ENCODE measurements at regions of chr2 and their contacts with region 1.

Region 1: GRCh38 chr2:190679813-190680591 is 31.1 kb downstream of the NAB1 start:
- DNase-seq: peak; percentile 80
- H3K4me3 Mint-ChIP-seq: peak overlapping the region; percentile 61
- H3K27ac Mint-ChIP-seq: peak overlapping the region; percentile 98
- H3K4me1 Mint-ChIP-seq: peaks cover 66% of the 10 kb centered on the region
- H3K27me3 Mint-ChIP-seq: no peaks in the 10 kb centered on the region

Region 2: DNA sequence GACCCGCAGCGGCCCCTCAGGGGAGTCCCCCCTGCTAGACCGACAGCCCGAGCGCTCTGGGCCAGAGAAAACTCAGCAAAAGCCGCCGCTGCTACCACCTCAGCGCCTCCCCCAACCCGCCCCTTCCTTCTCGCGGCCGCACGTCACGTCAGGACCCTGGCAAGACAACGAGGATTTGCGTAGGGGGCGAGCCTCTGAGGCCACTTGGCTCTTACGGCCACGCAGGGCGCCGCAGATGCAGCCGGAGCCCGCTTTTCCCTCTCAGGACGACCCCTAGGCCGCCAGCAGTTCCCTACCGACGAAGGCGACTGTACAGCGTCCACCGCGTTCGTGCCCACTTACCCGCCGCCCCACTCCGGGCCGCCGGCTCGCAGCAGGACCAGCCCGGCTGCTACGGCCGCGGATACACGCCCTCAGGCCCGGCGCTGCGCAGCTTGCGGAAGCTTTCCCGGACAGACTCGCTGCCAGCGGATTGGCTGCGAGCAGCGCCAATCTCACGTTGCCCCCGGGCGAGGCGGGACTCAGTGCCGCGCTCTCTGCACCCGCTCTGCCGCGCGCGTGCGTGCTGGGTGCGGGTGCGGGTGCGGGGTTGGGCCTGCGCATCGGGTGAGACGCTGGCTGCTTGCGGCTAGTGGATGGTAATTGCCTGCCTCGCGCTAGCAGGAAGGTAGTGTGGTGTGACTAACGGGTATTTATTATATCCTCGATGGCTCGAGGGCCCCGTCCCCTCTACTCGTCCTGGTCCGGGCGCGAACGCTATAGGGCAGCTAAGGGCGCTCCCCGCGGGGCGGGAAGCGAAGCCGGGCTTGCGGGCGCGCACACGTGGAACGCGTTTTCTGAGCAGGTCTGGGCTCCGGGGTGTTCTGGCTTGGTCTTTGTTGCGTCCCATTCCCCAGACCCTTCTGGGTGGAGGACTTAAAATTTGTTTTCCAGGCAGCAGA is 895.8 kb before region 1 on chr2 and contains the starts of genes ORMDL1 and PMS1:
- CTCF ChIA-PET with region 1: no interaction called
- POLR2A ChIA-PET with region 1: no interaction called
- intact Hi-C with region 1: loop called (anchors 10 kb)
- DNase-seq: peak; percentile 96
- H3K4me3 Mint-ChIP-seq: peak within 1 kb of the TSS; percentile 90
- H3K27ac Mint-ChIP-seq: peak within 1 kb of the TSS; percentile 95
- H3K4me1 Mint-ChIP-seq: peaks cover 52% of the 10 kb centered on the region
- H3K27me3 Mint-ChIP-seq: no peaks in the 10 kb centered on the region
- total RNA-seq, gene ORMDL1: 47.0 to 49.8 TPM
- total RNA-seq, gene PMS1: 36.0 to 38.6 TPM

Region 3: DNA sequence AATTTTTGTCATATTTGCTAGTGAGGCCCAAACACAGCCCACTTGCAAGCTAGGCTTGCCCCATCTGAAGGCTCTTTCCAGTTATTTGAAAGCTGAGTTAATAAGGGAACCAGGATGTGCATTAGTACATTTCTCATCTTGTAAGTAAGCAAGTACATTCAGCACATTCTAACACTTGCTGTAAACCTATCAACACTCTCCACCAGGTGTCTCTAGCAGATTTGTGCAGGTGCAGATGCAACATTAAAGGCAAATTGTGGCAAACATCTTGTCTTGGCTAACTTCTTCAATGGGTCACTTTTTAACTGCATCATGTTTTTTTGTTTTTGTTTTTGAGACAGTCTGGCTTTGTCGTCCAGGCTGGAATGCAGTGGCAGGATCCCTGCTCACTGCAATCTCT is 297.2 kb before region 1 on chr2:
- CTCF ChIA-PET with region 1: interaction called, 3 read pairs
- POLR2A ChIA-PET with region 1: no interaction called
- intact Hi-C with region 1: loop called (anchors 1 kb)
- DNase-seq: no peak
- H3K4me3 Mint-ChIP-seq: no peak overlapping the region
- H3K27ac Mint-ChIP-seq: no peak overlapping the region
- H3K4me1 Mint-ChIP-seq: peaks cover 4% of the 10 kb centered on the region
- H3K27me3 Mint-ChIP-seq: no peaks in the 10 kb centered on the region

Region 4: DNA sequence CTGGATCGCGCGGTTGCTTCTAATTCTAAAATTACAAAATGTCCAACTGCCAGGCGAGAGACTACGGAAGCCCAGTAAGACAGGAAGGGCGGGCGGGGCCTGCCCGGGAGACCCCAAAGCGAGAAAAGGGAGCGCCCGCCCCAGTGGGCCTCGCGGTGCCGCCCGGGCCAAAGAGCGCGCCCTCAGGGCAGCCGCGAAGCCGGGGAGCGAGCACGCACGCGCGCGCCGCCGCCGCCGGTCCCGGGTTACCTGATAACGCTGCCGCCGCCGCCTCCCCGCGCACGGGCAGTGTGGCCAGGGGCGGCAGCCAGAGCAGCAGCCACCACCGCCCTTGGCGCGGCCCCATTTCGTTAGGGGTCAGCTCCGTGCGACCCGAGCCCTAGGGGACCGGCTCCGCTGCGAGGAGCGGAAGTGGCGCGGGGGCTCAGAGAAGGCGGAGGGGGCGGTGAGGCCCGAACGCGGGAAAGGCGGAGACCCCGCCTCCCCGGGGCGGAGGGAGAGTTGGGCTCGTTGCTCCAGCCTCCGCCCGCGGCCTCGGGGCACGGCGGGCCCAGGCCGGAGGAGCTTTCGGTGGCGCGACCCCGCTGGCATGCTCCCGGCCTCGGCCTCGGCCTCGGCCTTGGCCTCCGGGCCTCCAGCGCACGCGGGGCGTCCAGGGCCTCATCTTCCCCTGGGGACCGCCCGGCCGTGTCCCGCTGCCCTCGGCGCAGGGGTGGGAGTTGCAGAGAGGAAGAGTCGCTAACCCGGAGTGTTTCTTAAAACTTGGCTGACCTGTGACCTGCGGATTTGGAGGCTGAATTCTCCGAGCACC is 145.5 kb before region 1 on chr2 and contains the start of gene NEMP2:
- CTCF ChIA-PET with region 1: interaction called, 16 read pairs
- POLR2A ChIA-PET with region 1: interaction called, 11 read pairs
- intact Hi-C with region 1: loop called (anchors 1 kb)
- DNase-seq: peak; percentile 86
- H3K4me3 Mint-ChIP-seq: peak within 1 kb of the TSS; percentile 95
- H3K27ac Mint-ChIP-seq: peak within 1 kb of the TSS; percentile 99
- H3K4me1 Mint-ChIP-seq: peaks cover 57% of the 10 kb centered on the region
- H3K27me3 Mint-ChIP-seq: no peaks in the 10 kb centered on the region
- total RNA-seq, gene NEMP2: 28.8 to 30.0 TPM

Region 5: GRCh38 chr2:190648289-190649034 is 31.5 kb before region 1 on chr2:
- CTCF ChIA-PET with region 1: interaction called, 27 read pairs
- POLR2A ChIA-PET with region 1: interaction called, 110 read pairs
- intact Hi-C with region 1: loop called (anchors 1 kb)
- DNase-seq: peak; percentile 85
- H3K4me3 Mint-ChIP-seq: peak overlapping the region; percentile 75
- H3K27ac Mint-ChIP-seq: peak overlapping the region; percentile 82
- H3K4me1 Mint-ChIP-seq: peaks cover 38% of the 10 kb centered on the region
- H3K27me3 Mint-ChIP-seq: no peaks in the 10 kb centered on the region

Region 6: GRCh38 chr2:190695739-190696138 is 15.7 kb after region 1 on chr2:
- CTCF ChIA-PET with region 1: interaction called, 49 read pairs
- POLR2A ChIA-PET with region 1: interaction called, 31 read pairs
- intact Hi-C with region 1: loop called (anchors 1 kb)
- DNase-seq: peak; percentile 61
- H3K4me3 Mint-ChIP-seq: no peak overlapping the region
- H3K27ac Mint-ChIP-seq: peak overlapping the region; percentile 44
- H3K4me1 Mint-ChIP-seq: peaks cover 42% of the 10 kb centered on the region
- H3K27me3 Mint-ChIP-seq: no peaks in the 10 kb centered on the region

Region 7: DNA sequence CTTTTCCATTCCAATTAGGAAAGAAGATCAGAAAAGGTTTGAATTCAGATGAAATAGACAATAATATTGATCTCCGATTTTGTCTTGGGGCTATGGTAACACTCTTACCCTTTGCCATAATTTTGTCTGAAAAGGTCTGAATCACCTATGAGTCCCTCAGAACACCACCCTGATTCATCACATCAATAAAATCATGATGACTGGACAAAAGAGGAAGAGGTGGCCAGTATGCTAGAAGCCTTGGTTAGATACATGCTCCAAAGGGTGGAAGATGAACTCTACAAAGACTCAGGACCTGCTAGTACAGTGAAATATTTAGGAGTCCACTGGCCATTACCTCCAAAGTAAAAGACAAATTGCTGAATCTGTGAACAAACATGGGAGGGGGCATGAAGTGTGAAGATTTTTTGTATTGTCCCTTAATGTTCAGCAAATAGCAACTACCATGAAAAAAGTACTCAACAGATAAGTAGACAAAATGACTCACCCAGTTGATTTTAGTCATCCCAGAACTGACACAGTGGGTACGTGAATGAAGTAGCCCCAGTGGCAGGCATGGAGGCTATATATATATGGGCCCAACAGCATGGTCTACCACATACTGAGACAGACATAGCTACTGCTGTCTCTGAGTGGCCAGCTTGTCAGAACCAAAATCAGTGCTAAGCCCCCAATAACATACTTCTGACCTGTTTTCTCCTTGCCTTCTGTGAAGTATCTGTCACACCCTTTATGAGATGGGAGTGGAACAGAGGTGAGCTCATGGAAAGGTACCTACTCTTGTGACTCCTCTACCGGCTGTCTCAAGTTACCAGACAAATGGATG is 164.1 kb after region 1 on chr2:
- CTCF ChIA-PET with region 1: no interaction called
- POLR2A ChIA-PET with region 1: interaction called, 4 read pairs
- intact Hi-C with region 1: loop called (anchors 1 kb)
- DNase-seq: peak; percentile 78
- H3K4me3 Mint-ChIP-seq: peak overlapping the region; percentile 30
- H3K27ac Mint-ChIP-seq: peak overlapping the region; percentile 92
- H3K4me1 Mint-ChIP-seq: peaks cover 39% of the 10 kb centered on the region
- H3K27me3 Mint-ChIP-seq: peaks cover 1% of the 10 kb centered on the region

Measured in activated CD4-positive, alpha-beta memory T cell treated with anti-CD3 and anti-CD28 coated beads for 36 hours (primary cell).